ENCODE measurements at regions of chr6 and their contacts with region 1.

Region 1: DNA sequence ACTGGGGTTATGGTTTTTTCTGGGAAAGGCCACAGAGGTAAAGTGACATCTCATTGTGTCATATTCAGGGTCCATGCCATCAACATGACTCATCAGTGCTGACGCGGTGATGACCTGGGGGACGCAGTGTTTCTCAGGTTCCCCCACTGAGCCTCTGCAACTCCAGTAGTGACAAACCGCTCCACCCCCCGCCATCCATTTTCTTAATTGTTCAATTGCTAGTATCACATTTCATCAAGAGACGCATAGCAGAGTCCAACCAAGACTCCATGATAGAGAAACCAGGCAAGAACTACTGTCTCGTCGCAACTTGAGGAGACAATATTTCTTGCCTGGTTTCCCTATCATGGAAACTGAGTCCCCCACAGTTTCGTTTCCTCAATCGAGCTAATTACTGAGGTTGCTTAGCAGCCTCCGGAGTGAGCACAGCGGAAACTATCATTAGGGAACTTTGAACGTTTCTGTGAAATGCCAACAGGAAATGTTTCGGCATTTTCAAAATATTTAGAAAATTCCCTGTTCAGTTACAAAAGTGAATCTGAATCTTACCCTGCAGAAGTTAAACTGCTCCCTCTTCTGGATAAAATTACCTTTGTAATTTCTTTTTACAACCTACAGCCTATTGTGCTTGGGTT is 12.2 kb upstream of the SERPINB1 start:
- DNase-seq: peak; percentile 82
- H3K4me3 ChIP-seq: peak overlapping the region; percentile 1 to 43 (median 12)
- H3K27ac ChIP-seq: peak overlapping the region; percentile 75
- H3K4me1 ChIP-seq: peaks cover 9% of the 10 kb centered on the region
- H3K27me3 ChIP-seq: no peaks in the 10 kb centered on the region
- CTCF ChIP-seq: peak; percentile 22 to 48

Region 2: DNA sequence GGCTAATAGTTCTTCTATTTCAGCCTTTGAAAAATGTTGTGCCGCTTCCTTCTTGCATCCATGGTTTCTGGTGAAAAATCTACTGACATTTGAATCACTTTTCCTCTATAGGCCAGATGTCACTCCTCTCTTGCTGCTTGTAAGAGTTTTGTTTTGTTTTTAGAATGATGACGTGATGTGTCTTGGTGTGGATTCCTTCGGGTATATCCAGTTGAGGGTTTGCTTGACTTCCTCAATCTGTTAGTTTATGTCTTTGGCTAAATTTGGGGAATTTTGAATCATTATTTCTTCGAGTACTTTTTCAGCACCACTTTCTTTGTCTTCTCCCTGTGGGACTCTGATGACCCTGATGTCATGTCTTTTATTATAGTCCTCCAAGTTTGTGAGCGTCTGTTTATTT is 278.6 kb before region 1 on chr6:
- CTCF ChIA-PET with region 1: no interaction called
- dilution Hi-C with region 1: no loop called
- in situ Hi-C with region 1: no loop called
- intact Hi-C with region 1: no loop called
- DNase-seq: no peak
- H3K4me3 ChIP-seq: no peak overlapping the region
- H3K27ac ChIP-seq: no peak overlapping the region
- H3K4me1 ChIP-seq: peaks cover 13% of the 10 kb centered on the region
- H3K27me3 ChIP-seq: no peaks in the 10 kb centered on the region
- CTCF ChIP-seq: no peak

Region 3: DNA sequence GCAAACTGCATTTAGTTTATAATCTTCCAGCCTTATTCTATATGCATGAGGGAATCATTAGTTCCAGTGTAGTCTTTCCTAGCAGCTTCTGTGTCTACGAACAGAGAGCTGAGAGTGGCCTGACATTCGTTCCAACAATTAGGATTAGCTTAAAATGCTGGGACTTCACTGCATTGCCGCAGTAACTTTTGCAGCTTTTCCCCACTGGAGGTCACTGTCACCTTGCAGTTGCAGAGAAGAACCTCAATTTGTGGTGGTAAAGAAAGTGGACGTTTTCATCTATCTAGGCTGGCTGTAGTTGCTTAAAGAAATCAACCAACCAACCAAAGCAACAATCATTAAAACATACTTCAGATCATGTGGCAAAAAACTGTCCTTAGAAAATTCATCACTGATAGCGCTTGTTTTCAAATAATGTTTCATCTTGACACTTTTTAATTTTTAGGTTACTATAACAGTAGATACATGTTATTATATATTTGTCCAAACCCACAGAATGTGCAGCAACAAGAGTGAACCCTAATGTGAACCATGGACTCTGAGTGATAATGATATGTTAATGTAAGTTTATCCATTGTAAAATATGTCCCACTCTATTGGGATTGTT is 115.4 kb before region 1 on chr6:
- CTCF ChIA-PET with region 1: no interaction called
- dilution Hi-C with region 1: no loop called
- in situ Hi-C with region 1: no loop called
- intact Hi-C with region 1: loop called (anchors 1 kb)
- DNase-seq: peak; percentile 37
- H3K4me3 ChIP-seq: no peak overlapping the region
- H3K27ac ChIP-seq: no peak overlapping the region
- H3K4me1 ChIP-seq: peaks cover 3% of the 10 kb centered on the region
- H3K27me3 ChIP-seq: no peaks in the 10 kb centered on the region
- CTCF ChIP-seq: peak; percentile 59 to 73

Region 4: GRCh38 chr6:2784930-2785329 is 68.9 kb before region 1 on chr6:
- CTCF ChIA-PET with region 1: no interaction called
- dilution Hi-C with region 1: loop called (anchors 10 kb)
- in situ Hi-C with region 1: loop called (anchors 5 kb)
- intact Hi-C with region 1: no loop called
- DNase-seq: no peak
- H3K4me3 ChIP-seq: no peak overlapping the region
- H3K27ac ChIP-seq: no peak overlapping the region
- H3K4me1 ChIP-seq: peaks cover 3% of the 10 kb centered on the region
- H3K27me3 ChIP-seq: no peaks in the 10 kb centered on the region
- CTCF ChIP-seq: no peak

Region 5: DNA sequence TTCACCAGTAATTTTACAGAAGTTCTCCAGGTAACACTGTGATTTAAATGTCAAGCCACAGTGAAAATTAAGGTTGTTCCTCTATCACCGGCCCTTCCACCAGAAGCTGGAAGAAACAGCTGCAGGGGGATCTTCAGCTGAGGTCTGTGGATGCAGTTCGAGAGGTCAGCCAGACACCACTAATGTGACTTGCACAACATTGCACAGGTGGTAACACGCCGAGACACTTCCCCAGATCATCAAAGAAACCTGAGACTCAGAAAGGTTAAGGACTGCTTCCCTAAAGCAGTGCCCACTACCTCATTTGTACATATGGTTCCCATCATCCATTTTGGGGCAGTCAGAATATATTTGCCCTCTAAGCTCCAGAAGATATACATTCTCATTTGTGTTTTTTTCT is 57.3 kb after region 1 on chr6:
- CTCF ChIA-PET with region 1: no interaction called
- dilution Hi-C with region 1: no loop called
- in situ Hi-C with region 1: loop called in 1 of 2 experiments (anchors 10 kb)
- intact Hi-C with region 1: no loop called
- DNase-seq: peak; percentile 25
- H3K4me3 ChIP-seq: no peak overlapping the region
- H3K27ac ChIP-seq: no peak overlapping the region
- H3K4me1 ChIP-seq: peaks cover 6% of the 10 kb centered on the region
- H3K27me3 ChIP-seq: no peaks in the 10 kb centered on the region
- CTCF ChIP-seq: no peak

Measured in mammary epithelial cell (primary cell).